ENCODE measurements at regions of chr1 and their contacts with region 1.

Region 1: GRCh38 chr1:43763497-43763973 is 56.2 kb downstream of the ST3GAL3 start:
- DNase-seq: peak; percentile 58 to 82
- H3K4me3 ChIP-seq: no peak overlapping the region
- H3K27ac ChIP-seq: no peak overlapping the region
- H3K4me1 ChIP-seq: no peaks in the 10 kb centered on the region
- H3K27me3 ChIP-seq: no peaks in the 10 kb centered on the region
- CTCF ChIP-seq: peak; percentile 82 to 94 (median 88)
- POLR2A ChIP-seq: no peak

Region 2: DNA sequence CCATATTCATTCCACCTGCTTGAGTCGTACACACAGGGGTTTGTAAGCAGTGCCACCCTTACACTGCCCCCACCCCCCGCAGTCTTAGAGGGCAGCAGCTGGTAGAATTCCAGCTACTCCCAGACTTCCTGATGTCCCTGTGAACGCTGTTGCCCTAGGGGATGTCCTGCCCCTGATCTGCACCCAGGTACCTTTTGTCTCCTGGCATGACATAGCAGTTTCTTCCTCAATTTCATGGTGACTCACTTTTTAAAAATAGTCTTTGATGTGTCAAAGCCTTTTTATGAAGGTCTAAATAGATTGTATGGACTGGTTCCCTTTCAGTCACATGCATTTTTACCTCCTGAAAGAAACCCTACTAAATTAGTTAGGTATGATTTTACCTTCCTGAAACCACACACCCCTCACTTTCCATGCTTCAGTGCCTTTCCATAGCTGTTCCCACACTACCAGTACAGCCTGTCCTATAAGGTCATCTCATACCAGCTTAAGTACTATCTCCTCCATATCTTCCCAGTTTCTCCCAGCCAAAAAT is 20.2 kb after region 1 on chr1:
- intact Hi-C with region 1: no loop called
- DNase-seq: peak; percentile 53 to 73
- H3K4me3 ChIP-seq: no peak overlapping the region
- H3K27ac ChIP-seq: no peak overlapping the region
- H3K4me1 ChIP-seq: no peaks in the 10 kb centered on the region
- H3K27me3 ChIP-seq: no peaks in the 10 kb centered on the region
- CTCF ChIP-seq: no peak
- POLR2A ChIP-seq: no peak

Region 3: DNA sequence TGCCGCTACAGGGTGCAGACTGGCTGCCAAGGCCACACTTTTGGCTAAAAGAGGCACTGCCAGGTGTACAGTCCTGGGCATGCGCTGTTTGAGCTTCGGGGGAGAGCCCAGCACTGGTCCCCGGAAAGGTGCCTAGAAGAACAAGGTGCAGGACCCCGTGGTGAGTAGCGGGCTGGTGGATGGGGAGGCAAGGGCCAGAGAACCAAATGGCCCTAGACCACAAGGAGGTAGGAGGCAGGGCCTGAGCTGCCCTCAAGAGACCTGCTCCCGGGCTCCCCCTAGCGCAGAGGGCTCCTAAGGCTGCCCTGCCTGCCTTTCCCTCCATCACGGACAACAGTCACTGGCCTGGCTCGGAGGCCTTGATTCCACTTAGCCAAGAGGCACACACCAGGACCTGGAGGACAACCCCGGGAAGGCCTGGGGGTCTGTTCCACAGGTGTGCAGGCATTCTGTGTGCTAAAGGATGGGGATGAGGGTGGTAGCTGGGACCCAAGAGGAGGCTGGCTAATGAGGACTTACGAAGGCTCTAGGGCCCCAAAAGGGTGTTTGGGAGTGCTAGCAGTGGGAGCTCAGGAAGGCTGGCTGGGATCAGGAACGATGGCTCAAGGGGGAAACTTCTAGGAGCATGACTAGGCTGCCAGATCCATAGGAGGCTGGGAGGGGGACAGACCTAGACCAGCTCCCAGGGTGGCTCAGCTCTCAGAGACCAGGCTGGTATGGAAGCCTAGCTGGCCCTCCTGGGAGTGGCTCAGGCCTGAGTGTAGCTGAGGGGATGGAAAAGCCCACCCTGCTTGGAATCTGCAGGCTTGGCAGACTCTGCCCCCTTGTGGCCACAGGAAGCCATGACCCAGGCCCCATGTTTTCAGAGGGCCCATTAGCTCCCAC is 170.8 kb after region 1 on chr1:
- intact Hi-C with region 1: loop called (anchors 10 kb)
- DNase-seq: no peak
- H3K4me3 ChIP-seq: peak overlapping the region; percentile 23 to 67 (median 55)
- H3K27ac ChIP-seq: peak overlapping the region; percentile 17 to 42
- H3K4me1 ChIP-seq: no peaks in the 10 kb centered on the region
- H3K27me3 ChIP-seq: no peaks in the 10 kb centered on the region
- CTCF ChIP-seq: peak; percentile 83 to 89 (median 87)
- POLR2A ChIP-seq: no peak

Region 4: GRCh38 chr1:44730741-44731512 is 967.4 kb after region 1 on chr1 and contains the start of gene RNU5D-1:
- intact Hi-C with region 1: no loop called
- DNase-seq: peak; percentile 92 to 93
- H3K4me3 ChIP-seq: peak within 1 kb of the TSS in 2 of 3 donors; percentile 25 to 46
- H3K27ac ChIP-seq: peak within 1 kb of the TSS; percentile 87 to 91
- H3K4me1 ChIP-seq: no peaks in the 10 kb centered on the region
- H3K27me3 ChIP-seq: no peaks in the 10 kb centered on the region
- CTCF ChIP-seq: peak; percentile 78 to 92 (median 89)
- POLR2A ChIP-seq: peak; percentile 95
- total RNA-seq, gene RNU5D-1: not detected